ENCODE measurements at regions of chr3 and their contacts with region 1.

Region 1: DNA sequence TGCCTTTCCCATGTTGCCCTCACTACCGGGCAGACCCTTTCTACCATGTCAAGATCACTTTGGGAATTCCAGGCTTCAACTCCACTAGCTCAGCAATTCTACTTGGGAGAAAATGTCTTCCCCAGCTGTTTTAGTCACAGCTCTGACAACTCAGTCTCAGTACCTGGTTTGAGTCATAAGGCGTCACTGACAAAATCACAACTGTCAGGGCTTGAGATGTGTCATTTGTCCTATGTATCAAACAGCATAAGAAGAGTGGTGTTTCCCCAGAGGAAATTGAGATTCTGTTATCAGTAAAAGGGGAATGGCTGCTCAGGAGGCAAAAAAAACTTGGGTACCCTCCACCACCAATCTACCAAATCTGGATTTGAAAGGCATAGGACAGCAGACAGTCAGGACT is 594.9 kb upstream of the SUCLG2 start:
- DNase-seq: peak; percentile 67
- H3K4me3 Mint-ChIP-seq: no peak overlapping the region
- H3K27ac Mint-ChIP-seq: no peak overlapping the region
- H3K4me1 Mint-ChIP-seq: peaks cover 11% of the 10 kb centered on the region
- H3K27me3 Mint-ChIP-seq: no peaks in the 10 kb centered on the region

Region 2: DNA sequence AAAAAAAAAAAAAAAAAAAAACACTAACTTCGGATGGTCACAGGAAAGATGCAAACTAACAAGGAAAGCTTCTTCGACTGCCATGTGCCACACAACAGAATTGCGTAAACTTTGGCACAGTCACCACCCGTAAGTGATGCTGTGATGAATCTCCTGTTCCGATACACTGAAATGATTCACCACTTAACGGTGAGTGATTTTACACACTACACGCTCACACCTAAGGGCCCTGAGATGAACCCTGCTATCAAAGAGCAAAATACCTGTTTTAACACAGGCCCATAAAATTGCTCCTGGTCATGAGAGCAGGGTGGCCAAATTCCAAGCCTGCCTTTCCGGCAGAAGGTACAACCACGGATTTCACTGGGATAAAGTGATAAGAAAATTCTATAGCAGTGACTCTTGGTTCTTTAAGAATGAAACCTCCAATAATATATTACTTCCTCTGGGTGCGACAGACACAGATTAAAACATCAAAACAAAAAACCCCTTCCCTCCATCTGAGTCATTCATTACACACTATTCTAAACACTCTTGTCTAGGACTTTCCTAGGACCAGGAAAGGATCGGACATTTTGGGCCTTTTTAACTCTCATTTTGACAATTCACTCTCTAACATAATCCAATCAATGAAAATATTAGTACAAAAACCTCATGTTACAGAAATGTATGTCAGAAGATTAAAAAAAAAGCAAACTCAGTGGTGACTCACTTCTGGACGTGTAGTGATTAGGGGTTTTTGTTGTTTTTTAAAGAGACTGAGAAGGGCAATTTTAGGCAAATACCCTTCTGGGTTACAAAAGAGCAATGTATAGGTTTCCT is 1776.7 kb before region 1 on chr3:
- CTCF ChIA-PET with region 1: no interaction called
- intact Hi-C with region 1: loop called (anchors 2 kb)
- DNase-seq: peak; percentile 77
- H3K4me3 Mint-ChIP-seq: peak overlapping the region; percentile 42
- H3K27ac Mint-ChIP-seq: peak overlapping the region; percentile 94
- H3K4me1 Mint-ChIP-seq: peaks cover 64% of the 10 kb centered on the region
- H3K27me3 Mint-ChIP-seq: no peaks in the 10 kb centered on the region

Region 3: GRCh38 chr3:67077656-67078055 is 1171.6 kb before region 1 on chr3:
- CTCF ChIA-PET with region 1: no interaction called
- intact Hi-C with region 1: loop called (anchors 1 kb)
- DNase-seq: peak; percentile 16
- H3K4me3 Mint-ChIP-seq: no peak overlapping the region
- H3K27ac Mint-ChIP-seq: no peak overlapping the region
- H3K4me1 Mint-ChIP-seq: peaks cover 50% of the 10 kb centered on the region
- H3K27me3 Mint-ChIP-seq: no peaks in the 10 kb centered on the region

Region 4: DNA sequence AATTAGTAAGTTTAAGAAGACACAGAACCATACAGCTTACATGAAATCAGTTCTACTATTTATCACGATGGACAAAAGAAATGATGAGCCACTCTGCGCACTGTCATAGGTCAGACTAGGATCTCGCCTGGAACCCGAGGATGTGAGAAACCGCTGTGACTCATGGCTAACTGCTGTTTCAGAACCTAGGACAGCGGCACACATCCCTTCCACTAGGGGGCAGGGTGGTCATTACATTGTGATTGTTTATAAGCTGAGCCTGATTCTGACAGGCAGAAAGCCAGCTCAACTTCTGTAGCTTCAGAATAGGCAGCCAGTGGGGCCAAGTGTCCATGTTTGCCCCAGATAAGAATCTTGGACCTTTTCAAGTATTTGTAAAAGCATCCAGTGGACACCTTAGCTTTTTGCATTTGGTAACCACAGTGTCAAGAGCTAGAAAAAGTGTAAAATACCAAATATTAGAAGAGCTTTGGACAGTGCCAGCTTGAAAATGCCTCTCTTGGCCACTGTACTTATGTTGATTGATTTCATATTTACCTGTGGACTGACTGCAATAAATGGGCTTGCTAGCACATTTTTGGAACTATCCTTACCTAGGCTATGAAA is 1135.4 kb before region 1 on chr3:
- CTCF ChIA-PET with region 1: no interaction called
- intact Hi-C with region 1: loop called (anchors 10 kb)
- DNase-seq: peak; percentile 94
- H3K4me3 Mint-ChIP-seq: no peak overlapping the region
- H3K27ac Mint-ChIP-seq: no peak overlapping the region
- H3K4me1 Mint-ChIP-seq: peaks cover 4% of the 10 kb centered on the region
- H3K27me3 Mint-ChIP-seq: peaks cover 24% of the 10 kb centered on the region

Region 5: DNA sequence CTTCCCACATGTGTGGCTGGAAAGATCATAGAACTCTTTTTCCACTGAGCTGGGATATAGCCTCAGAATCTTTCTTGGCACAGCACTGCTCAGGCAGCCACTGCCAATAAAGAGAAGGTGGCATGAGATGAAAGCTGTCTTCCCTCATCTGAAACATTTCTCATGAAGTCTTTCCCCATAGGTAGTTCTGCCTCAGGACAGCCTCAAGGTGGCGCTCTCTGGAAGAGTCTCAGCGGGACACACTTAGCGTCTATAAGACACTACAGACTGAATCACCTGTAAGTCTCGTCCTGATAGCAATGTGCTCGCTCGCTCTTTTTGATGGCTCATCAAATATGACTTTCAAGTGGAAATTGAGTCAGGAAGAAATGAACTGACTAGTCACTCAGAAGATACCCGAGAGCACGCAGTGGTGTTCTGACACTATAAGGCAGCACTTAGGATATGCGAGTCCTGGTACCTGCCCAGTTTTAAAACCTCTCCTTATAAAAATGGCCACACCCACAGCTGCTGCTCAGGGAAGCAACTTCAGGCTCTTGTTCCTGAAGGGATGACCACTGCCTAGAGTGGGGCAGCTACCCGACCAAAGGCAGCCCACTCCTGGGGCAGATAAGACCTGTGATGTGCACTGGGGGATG is 864.4 kb before region 1 on chr3:
- CTCF ChIA-PET with region 1: no interaction called
- intact Hi-C with region 1: loop called (anchors 10 kb)
- DNase-seq: peak; percentile 67
- H3K4me3 Mint-ChIP-seq: no peak overlapping the region
- H3K27ac Mint-ChIP-seq: no peak overlapping the region
- H3K4me1 Mint-ChIP-seq: peaks cover 31% of the 10 kb centered on the region
- H3K27me3 Mint-ChIP-seq: no peaks in the 10 kb centered on the region

Region 6: GRCh38 chr3:67739851-67740250 is 509.4 kb before region 1 on chr3:
- CTCF ChIA-PET with region 1: no interaction called
- intact Hi-C with region 1: no loop called
- DNase-seq: no peak
- H3K4me3 Mint-ChIP-seq: no peak overlapping the region
- H3K27ac Mint-ChIP-seq: peak overlapping the region; percentile 9
- H3K4me1 Mint-ChIP-seq: peaks cover 66% of the 10 kb centered on the region
- H3K27me3 Mint-ChIP-seq: no peaks in the 10 kb centered on the region

Region 7: DNA sequence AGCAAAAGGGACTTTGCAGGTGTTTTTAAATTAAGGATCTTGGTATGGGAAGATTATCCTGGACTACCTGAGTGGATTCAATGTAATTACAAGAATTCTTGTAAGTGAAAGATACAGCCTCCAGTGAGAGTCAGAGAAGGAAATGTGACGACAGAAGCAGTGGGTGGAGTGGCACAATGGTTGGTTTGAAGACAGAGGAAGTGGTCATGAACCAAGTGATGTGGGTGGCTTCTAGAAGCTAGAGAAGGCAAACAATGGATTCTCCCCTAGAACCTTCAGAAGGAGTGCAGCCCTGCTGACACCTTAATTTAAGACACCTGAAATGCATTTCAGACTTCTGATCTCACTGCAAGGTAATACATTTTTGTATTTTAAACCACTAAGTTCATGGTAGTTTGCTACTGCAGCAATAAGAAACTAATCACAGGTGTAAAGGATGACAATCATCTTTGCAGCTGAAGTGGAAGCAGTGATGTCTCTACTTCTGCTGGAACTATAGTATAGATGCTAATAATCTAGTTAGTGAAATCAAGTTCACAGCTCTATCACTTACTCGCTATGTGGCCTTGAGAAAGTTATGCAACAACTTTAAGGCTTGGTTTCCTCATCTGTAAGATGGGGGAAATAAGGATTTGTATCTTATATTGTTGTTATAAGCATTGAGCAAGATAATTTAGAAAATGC is 191.5 kb before region 1 on chr3:
- CTCF ChIA-PET with region 1: no interaction called
- intact Hi-C with region 1: loop called (anchors 1 kb)
- DNase-seq: peak; percentile 85
- H3K4me3 Mint-ChIP-seq: peak overlapping the region; percentile 53
- H3K27ac Mint-ChIP-seq: peak overlapping the region; percentile 76
- H3K4me1 Mint-ChIP-seq: peaks cover 67% of the 10 kb centered on the region
- H3K27me3 Mint-ChIP-seq: no peaks in the 10 kb centered on the region

Region 8: GRCh38 chr3:68876112-68876713 is 626.9 kb after region 1 on chr3:
- CTCF ChIA-PET with region 1: no interaction called
- intact Hi-C with region 1: loop called (anchors 10 kb)
- DNase-seq: peak; percentile 51
- H3K4me3 Mint-ChIP-seq: no peak overlapping the region
- H3K27ac Mint-ChIP-seq: no peak overlapping the region
- H3K4me1 Mint-ChIP-seq: no peaks in the 10 kb centered on the region
- H3K27me3 Mint-ChIP-seq: peaks cover 5% of the 10 kb centered on the region

Measured in activated naive CD4-positive, alpha-beta T cell treated with anti-CD3 and anti-CD28 coated beads for 36 hours (primary cell).